Colonic mucosa (tissue), 4 donors: ENCODE measurements at regions of chr2 and their contacts with region 1.

Region 1: DNA sequence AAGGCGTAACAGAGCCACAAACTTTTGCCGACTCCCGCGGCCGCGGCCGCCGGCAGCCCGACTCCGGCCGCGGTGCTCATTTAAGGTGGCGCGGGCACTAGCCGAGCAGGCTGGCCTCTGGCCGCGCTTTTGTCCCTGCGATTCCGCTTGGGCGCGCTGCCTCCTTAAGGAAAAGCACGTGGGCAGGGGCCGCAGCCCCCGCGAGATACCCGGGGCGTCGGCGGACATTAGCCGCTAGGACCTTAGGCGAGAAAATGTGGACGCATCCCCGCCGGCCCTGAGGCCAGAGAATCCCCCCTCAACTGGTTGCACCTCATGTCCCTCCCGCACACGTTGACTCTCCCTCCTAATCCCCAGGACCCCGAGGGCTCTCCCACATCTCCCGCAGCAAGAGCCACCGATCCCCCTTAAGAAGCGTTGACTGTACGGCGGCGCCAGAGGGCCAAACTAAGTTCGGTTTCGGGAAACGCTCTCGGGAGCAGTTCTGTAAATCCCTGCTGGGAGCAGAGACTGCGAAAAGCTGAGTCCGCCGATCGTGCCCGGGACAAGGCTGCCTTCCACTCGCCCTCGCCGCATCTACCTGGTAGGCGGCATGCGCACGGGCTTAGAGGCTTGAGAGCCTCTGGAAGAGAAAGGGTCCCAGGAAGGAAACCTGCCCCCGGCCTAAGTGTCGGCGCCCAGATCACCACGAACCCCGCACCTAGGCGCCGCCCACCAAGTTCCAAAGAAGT is 1.7 kb upstream of the SATB2 start:
- DNase-seq: peak; percentile 88
- H3K4me3 ChIP-seq: peak overlapping the region; percentile 79
- H3K27ac ChIP-seq: peak overlapping the region; percentile 86
- H3K4me1 ChIP-seq: no peaks in the 10 kb centered on the region
- H3K27me3 ChIP-seq: peaks cover 8% of the 10 kb centered on the region
- CTCF ChIP-seq: no peak

Region 2: GRCh38 chr2:198774576-198774975 is 684.9 kb before region 1 on chr2:
- intact Hi-C with region 1: loop called (anchors 5 kb)
- DNase-seq: no peak
- H3K4me3 ChIP-seq: no peak overlapping the region
- H3K27ac ChIP-seq: peak overlapping the region; percentile 63
- H3K4me1 ChIP-seq: no peaks in the 10 kb centered on the region
- H3K27me3 ChIP-seq: no peaks in the 10 kb centered on the region
- CTCF ChIP-seq: no peak

Region 3: DNA sequence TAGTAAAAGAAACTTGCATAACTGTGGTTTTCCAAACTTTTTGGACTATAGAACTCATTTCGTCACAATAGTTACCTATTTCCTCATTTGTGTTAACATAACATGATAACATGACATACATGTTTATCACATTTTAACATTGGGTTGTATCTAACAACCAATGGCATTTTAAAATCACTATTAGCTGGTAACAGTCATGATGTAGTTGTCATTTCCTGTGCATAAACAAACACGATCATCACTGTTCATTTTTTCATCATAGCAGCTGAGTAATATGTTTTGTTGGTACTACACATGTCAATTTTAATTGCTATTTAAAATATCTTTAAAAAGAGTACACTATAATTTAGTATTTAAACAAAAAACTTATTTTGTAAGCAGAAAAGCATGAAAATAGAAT is 404.1 kb before region 1 on chr2:
- intact Hi-C with region 1: no loop called
- DNase-seq: no peak
- H3K4me3 ChIP-seq: no peak overlapping the region
- H3K27ac ChIP-seq: no peak overlapping the region
- H3K4me1 ChIP-seq: no peaks in the 10 kb centered on the region
- H3K27me3 ChIP-seq: no peaks in the 10 kb centered on the region
- CTCF ChIP-seq: no peak

Region 4: GRCh38 chr2:199431746-199432213 is 27.7 kb before region 1 on chr2:
- intact Hi-C with region 1: no loop called
- DNase-seq: no peak
- H3K4me3 ChIP-seq: no peak overlapping the region
- H3K27ac ChIP-seq: no peak overlapping the region
- H3K4me1 ChIP-seq: no peaks in the 10 kb centered on the region
- H3K27me3 ChIP-seq: no peaks in the 10 kb centered on the region
- CTCF ChIP-seq: no peak

Region 5: GRCh38 chr2:201100497-201100896 is 1641.0 kb after region 1 on chr2:
- intact Hi-C with region 1: no loop called
- DNase-seq: no peak
- H3K4me3 ChIP-seq: no peak overlapping the region
- H3K27ac ChIP-seq: no peak overlapping the region
- H3K4me1 ChIP-seq: no peaks in the 10 kb centered on the region
- H3K27me3 ChIP-seq: no peaks in the 10 kb centered on the region
- CTCF ChIP-seq: no peak